ENCODE measurements at regions of chr13 and their contacts with region 1.

Region 1: DNA sequence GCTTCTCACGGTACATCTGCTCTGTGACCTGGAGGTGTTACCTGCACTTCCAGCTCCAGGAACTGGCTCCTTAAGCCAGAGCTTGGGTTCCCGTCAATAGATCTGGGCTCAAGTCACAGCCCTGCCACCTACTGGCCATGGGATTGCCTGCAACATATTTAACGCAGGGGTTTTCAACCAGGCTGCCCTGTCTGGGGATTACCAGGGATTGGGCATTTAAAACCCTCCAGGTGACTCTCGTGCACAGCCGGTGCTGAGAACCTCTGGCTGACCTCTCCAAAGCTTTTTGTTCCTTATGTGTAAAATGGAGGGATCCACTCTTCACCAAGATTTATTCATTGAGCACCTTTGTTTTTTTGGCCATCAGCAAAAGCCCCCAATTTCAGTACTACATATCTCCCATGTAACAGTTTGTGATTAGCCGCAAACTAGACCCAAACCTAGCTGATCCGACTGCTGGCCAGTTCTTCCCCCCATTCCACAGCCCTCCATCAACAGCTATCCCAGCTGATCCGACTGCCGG is 76.6 kb upstream of the STK24 start:
- DNase-seq: peak; percentile 47 to 72
- ATAC-seq: peak; percentile 90 to 94
- H3K4me3 ChIP-seq: no peak overlapping the region
- H3K27ac ChIP-seq: no peak overlapping the region
- H3K4me1 ChIP-seq: no peaks in the 10 kb centered on the region
- H3K27me3 ChIP-seq: no peaks in the 10 kb centered on the region
- CTCF ChIP-seq: peak; percentile 83 to 92 (median 84)
- POLR2A ChIP-seq: no peak

Region 2: DNA sequence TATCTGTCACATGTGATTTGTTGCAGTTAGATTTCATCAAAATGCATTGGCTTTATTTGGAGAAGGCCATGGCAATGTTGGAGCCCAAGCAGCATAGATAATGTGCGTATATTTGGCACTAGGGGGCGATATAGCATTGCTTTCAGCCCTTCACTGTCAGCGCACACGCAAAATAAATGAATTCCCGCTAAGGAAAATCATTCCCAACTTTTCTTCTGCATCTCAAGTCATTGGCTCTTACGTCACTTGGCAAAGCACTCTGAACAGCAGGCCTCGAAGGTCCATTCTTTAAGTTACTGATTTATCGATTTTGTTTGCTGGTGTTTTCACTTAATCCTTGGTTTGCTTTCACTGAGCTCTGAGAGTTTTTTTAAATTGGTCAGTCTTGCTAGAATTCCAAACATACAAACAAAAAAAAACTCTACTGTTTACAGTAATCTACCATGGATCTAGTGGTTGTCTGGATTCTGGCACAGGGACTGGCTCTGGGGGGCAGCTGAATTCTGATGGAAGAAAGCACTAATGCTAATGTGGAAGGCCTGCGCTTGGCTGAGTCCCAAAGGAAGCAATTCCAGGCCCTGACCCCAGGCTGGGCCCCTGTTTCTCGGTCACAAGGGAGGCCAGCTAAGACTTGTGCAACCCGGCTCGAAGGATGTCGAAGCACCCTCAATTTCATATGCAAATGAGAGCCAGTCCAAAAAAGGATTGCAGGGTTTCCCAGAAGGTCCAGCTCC is 797.8 kb before region 1 on chr13:
- in situ Hi-C with region 1: loop called in 3 of 4 experiments (anchors 25 kb)
- intact Hi-C with region 1: no loop called
- DNase-seq: peak; percentile 15 to 29
- ATAC-seq: peak; percentile 76 to 87
- H3K4me3 ChIP-seq: no peak overlapping the region
- H3K27ac ChIP-seq: peak overlapping the region in 1 of 4 donors; percentile 19
- H3K4me1 ChIP-seq: peaks cover 0 to 6% of the 10 kb centered on the region in 2 donors
- H3K27me3 ChIP-seq: no peaks in the 10 kb centered on the region
- CTCF ChIP-seq: peak; percentile 59 to 79 (median 61)
- POLR2A ChIP-seq: no peak

Region 3: DNA sequence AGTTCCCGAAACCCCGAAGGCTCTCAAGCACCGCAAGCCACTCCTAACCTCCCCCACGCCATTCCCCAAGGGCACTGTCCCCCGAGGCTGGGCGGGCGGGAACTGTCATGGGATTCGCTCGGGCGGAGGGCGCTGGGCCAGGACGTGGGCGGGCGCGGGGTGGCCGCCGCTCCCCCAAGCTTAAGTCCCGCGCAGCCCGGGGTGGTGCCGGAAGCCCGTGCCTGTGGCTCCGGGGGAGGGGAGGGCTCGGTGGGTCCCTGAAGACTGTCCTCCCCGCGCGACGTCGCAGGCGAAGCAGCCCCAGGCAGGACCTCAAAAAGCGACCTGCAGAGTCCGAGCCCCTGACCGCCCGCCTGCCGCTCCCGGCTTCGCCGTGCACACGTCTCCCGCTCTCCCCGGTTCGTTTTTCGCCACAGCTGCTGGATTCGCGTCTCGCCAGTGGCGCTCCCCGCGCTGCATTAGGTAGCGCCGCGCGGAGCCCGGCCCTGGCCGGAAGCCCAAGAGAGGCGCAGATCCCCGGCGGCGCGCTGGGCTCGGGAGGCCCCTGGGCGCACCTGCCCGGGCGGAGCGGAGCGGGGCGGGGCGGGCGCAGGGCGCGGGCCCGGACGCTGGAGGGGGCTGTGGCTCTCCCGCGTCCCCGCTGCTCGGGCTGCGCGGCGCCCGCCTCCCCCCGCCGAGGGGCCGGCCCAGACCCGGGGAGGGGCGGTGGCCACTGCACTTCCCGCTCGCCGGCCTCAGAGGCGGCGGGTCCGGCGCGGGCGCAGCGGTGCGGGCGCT is 511.0 kb before region 1 on chr13 and contains the start of gene FARP1:
- in situ Hi-C with region 1: loop called in 2 of 4 experiments (anchors 10 to 25 kb)
- intact Hi-C with region 1: no loop called
- DNase-seq: peak; percentile 35 to 43
- ATAC-seq: peak; percentile 81 to 82
- H3K4me3 ChIP-seq: peak within 1 kb of the TSS; percentile 53 to 72 (median 58)
- H3K27ac ChIP-seq: peak within 1 kb of the TSS; percentile 21 to 66 (median 50)
- H3K4me1 ChIP-seq: peaks cover 2 to 17% of the 10 kb centered on the region in 2 donors
- H3K27me3 ChIP-seq: peaks cover 0 to 6% (median 0%) of the 10 kb centered on the region in 3 donors
- CTCF ChIP-seq: peak in 4 of 5 experiments; percentile 34 to 66 (median 45)
- POLR2A ChIP-seq: peak; percentile 31 to 47
- total RNA-seq, gene FARP1: 3.5 to 9.8 (median 4.9) TPM

Region 4: GRCh38 chr13:98445340-98446233 is 207.9 kb before region 1 on chr13:
- in situ Hi-C with region 1: loop called (anchors 5 kb)
- intact Hi-C with region 1: loop called (anchors 1 kb)
- DNase-seq: peak; percentile 37 to 59
- ATAC-seq: peak; percentile 53 to 65
- H3K4me3 ChIP-seq: no peak overlapping the region
- H3K27ac ChIP-seq: peak overlapping the region in 3 of 4 donors; percentile 14 to 40 (median 17)
- H3K4me1 ChIP-seq: peaks cover 10 to 17% of the 10 kb centered on the region in 2 donors
- H3K27me3 ChIP-seq: no peaks in the 10 kb centered on the region
- CTCF ChIP-seq: peak; percentile 82 to 97 (median 96)
- POLR2A ChIP-seq: no peak

Region 5: DNA sequence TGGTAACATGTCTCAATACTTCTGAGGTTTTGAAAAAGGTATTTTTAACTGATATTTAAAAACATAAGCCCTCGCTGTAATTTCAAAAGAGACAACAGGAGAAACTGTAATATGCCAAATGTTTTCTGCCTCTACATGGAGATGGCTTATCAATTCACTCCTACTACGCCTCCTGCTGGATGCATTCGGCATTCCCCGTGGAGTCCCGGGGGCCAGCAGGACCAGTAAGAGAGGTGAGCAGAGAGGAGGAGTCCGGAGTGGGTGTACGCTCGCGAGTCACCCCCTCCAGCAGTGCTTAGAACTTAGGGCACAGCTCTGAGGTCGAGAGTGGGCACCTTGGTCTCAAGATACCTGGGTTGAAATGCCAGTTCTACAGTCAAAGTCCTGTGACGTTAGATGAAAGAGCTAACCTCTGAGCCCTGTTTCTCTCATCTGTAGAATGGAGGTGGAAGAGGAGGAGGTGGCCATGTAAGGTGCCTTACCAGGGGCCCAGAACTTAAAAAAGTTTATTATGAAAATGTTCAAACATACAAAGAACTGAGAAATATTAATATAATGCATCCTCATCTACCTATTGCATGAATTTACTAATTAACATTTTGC is 186.8 kb before region 1 on chr13:
- in situ Hi-C with region 1: no loop called
- intact Hi-C with region 1: loop called (anchors 1 kb)
- DNase-seq: no peak
- ATAC-seq: peak in 1 of 2 donors; percentile 39
- H3K4me3 ChIP-seq: no peak overlapping the region
- H3K27ac ChIP-seq: no peak overlapping the region
- H3K4me1 ChIP-seq: peaks cover 13 to 15% of the 10 kb centered on the region in 2 donors
- H3K27me3 ChIP-seq: no peaks in the 10 kb centered on the region
- CTCF ChIP-seq: peak in 4 of 5 experiments; percentile 16 to 63 (median 45)
- POLR2A ChIP-seq: no peak

Region 6: GRCh38 chr13:98484289-98485219 is 169.0 kb before region 1 on chr13:
- in situ Hi-C with region 1: no loop called
- intact Hi-C with region 1: loop called (anchors 2 kb)
- DNase-seq: peak; percentile 79 to 95
- ATAC-seq: peak; percentile 78 to 82
- H3K4me3 ChIP-seq: peak overlapping the region; percentile 4 to 24 (median 10)
- H3K27ac ChIP-seq: peak overlapping the region; percentile 82 to 88 (median 86)
- H3K4me1 ChIP-seq: peaks cover 81 to 83% of the 10 kb centered on the region in 2 donors
- H3K27me3 ChIP-seq: no peaks in the 10 kb centered on the region
- CTCF ChIP-seq: no peak
- POLR2A ChIP-seq: peak; percentile 38 to 43

Region 7: GRCh38 chr13:98576963-98577822 is 76.3 kb before region 1 on chr13 and contains the start of gene STK24:
- in situ Hi-C with region 1: no loop called
- intact Hi-C with region 1: loop called (anchors 5 kb)
- DNase-seq: peak; percentile 35 to 57
- ATAC-seq: peak; percentile 73 to 80
- H3K4me3 ChIP-seq: peak within 1 kb of the TSS; percentile 78 to 94 (median 89)
- H3K27ac ChIP-seq: peak within 1 kb of the TSS; percentile 95 to 97 (median 96)
- H3K4me1 ChIP-seq: peaks cover 24 to 42% of the 10 kb centered on the region in 2 donors
- H3K27me3 ChIP-seq: no peaks in the 10 kb centered on the region
- CTCF ChIP-seq: no peak
- POLR2A ChIP-seq: peak; percentile 56 to 65
- total RNA-seq, gene STK24: 28.7 to 68.4 (median 49.4) TPM

Measured in gastrocnemius medialis (tissue), 4 donors.